Posterior vena cava (tissue), 2 donors: ENCODE measurements at regions of chrX and their contacts with region 1.

Region 1: GRCh38 chrX:128335671-128336070 is 283.5 kb upstream of the ACTRT1 start:
- DNase-seq: no peak

Region 2: GRCh38 chrX:128216364-128216763 is 119.3 kb before region 1 on chrX:
- intact Hi-C with region 1: no loop called
- DNase-seq: no peak

Region 3: DNA sequence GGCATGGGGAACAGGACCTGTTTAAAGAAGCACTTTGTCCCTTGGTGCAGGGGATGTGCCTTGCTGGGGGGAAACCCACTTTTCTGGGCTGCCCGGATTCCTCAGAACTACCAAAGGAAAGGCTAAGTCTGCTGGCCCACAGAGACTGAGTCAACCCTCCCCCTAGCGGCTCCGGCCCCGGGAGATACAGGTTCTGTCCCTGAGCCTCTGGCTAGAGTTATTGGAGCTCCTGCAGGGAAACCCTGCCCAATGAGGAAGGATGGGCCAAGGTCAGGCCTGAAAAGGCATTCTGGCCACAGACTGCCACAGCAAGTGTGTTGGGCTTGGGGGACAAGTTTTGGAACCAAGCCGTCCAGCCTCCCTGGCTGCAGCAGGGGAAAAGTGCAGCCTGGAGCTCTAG is 207.4 kb after region 1 on chrX:
- intact Hi-C with region 1: no loop called
- DNase-seq: peak; percentile 75

Region 4: DNA sequence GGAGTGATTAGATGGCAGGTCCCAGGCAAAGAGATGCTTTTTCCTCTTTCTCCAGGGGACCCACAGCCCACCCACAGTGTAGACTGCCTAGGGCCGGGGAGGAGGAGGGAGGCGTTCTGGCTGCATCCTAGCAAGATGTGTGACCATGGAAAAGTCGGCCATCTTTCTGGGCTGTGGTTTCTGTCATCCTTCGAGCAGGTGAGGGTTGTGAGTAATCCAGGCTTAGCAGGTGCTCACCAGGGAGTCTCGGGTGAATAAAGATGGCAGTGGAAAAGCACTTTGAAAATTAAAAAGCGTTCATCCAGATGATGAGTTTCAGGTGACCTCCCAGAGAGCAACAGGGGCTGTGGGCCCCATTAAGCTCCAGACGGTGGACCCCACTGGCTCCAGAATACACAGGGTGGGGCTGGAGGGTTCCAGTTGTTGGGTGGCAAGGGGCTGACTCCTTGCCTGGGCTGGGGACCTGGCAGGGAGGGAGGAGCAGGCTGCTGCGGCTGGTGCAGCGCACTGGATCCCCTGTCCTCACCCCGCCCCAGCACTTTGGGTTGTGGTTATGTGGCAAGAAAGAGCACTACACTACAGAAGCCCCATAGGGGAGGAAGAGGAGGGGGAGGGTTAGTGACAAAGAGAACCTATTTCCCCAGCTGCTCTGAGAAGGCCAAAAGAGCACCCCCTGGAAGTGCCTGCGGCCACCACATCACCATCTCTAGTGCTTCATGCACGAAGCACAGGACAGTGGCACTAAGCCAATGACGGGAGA is 1751.0 kb after region 1 on chrX:
- intact Hi-C with region 1: loop called in 1 of 2 experiments (anchors 5 kb)
- DNase-seq: no peak